WTC11 (cell line): ENCODE measurements at regions of chr1 and their contacts with region 1.

Region 1: GRCh38 chr1:3352299-3352951 is 102.0 kb upstream of the ARHGEF16 start:
- DNase-seq: peak; percentile 52
- ATAC-seq: peak; percentile 57
- H3K4me3 Mint-ChIP-seq: peak overlapping the region; percentile 66
- H3K27ac Mint-ChIP-seq: peak overlapping the region; percentile 83; the same call in 1 of the 2 replicates
- H3K4me1 Mint-ChIP-seq: peaks cover 21% of the 10 kb centered on the region
- H3K27me3 Mint-ChIP-seq: no peaks in the 10 kb centered on the region
- CTCF ChIP-seq: no peak

Region 2: GRCh38 chr1:3312898-3313575 is 39.4 kb before region 1 on chr1:
- CTCF ChIA-PET with region 1: interaction called, 14 read pairs
- POLR2A ChIA-PET with region 1: no interaction called
- DNase-seq: peak; percentile 49
- ATAC-seq: peak; percentile 63; the same call in 1 of the 2 replicates
- H3K4me3 Mint-ChIP-seq: no peak overlapping the region
- H3K27ac Mint-ChIP-seq: peak overlapping the region; percentile 57; the same call in 1 of the 2 replicates
- H3K4me1 Mint-ChIP-seq: peaks cover 27% of the 10 kb centered on the region
- H3K27me3 Mint-ChIP-seq: peaks cover 30% of the 10 kb centered on the region
- CTCF ChIP-seq: no peak

Region 3: GRCh38 chr1:3403388-3404231 is 51.2 kb after region 1 on chr1:
- CTCF ChIA-PET with region 1: interaction called, 10 read pairs
- POLR2A ChIA-PET with region 1: no interaction called
- DNase-seq: peak; percentile 71
- ATAC-seq: peak; percentile 89
- H3K4me3 Mint-ChIP-seq: no peak overlapping the region
- H3K27ac Mint-ChIP-seq: no peak overlapping the region
- H3K4me1 Mint-ChIP-seq: no peaks in the 10 kb centered on the region
- H3K27me3 Mint-ChIP-seq: no peaks in the 10 kb centered on the region
- CTCF ChIP-seq: peak; percentile 19; the same call in 1 of the 2 replicates

Region 4: DNA sequence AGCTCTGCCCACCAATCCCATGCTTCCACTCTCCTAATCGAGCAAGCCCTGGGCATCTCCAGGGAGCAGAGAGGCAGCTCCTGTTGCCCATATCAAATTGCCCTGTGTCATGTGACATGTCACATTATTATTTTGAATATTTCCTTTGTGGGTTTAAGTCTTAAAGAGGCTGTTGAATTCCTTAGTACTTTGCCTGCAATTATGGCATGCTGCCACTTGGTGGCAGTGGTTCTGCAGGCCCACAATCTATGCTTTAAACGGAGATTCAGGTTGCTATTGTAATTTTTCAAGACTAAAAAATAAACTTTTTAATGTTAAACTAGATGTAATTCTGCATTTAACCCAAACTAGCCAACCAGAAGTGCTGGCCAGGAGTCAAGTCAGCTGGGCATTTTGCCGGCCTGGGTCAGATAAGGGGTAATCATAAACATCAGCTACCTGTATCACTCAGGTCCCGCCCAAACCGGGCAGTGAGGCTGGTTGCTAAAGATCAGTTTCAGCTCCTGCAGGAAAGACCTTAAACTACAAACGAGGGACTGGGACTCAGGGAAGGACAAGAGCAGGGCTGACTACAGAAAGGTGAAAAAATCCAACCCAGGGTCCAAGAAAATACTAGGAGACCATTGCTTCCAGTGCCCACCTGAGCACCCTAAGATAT is 64.8 kb after region 1 on chr1:
- CTCF ChIA-PET with region 1: interaction called, 13 read pairs
- POLR2A ChIA-PET with region 1: no interaction called
- DNase-seq: no peak
- ATAC-seq: no peak
- H3K4me3 Mint-ChIP-seq: no peak overlapping the region
- H3K27ac Mint-ChIP-seq: no peak overlapping the region
- H3K4me1 Mint-ChIP-seq: no peaks in the 10 kb centered on the region
- H3K27me3 Mint-ChIP-seq: peaks cover 7% of the 10 kb centered on the region; the same call in 1 of the 2 replicates
- CTCF ChIP-seq: peak; percentile 60